ENCODE measurements at regions of chr7 and their contacts with region 1.

Region 1: GRCh38 chr7:26090927-26091519 is 61.0 kb upstream of the NFE2L3 start:
- DNase-seq: peak; percentile 20
- ATAC-seq: peak; percentile 59
- H3K4me3 Mint-ChIP-seq: peak overlapping the region; percentile 1
- H3K27ac Mint-ChIP-seq: peak overlapping the region; percentile 33
- H3K4me1 Mint-ChIP-seq: peaks cover 20% of the 10 kb centered on the region
- H3K27me3 Mint-ChIP-seq: no peaks in the 10 kb centered on the region
- CTCF ChIP-seq: peak; percentile 78

Region 2: DNA sequence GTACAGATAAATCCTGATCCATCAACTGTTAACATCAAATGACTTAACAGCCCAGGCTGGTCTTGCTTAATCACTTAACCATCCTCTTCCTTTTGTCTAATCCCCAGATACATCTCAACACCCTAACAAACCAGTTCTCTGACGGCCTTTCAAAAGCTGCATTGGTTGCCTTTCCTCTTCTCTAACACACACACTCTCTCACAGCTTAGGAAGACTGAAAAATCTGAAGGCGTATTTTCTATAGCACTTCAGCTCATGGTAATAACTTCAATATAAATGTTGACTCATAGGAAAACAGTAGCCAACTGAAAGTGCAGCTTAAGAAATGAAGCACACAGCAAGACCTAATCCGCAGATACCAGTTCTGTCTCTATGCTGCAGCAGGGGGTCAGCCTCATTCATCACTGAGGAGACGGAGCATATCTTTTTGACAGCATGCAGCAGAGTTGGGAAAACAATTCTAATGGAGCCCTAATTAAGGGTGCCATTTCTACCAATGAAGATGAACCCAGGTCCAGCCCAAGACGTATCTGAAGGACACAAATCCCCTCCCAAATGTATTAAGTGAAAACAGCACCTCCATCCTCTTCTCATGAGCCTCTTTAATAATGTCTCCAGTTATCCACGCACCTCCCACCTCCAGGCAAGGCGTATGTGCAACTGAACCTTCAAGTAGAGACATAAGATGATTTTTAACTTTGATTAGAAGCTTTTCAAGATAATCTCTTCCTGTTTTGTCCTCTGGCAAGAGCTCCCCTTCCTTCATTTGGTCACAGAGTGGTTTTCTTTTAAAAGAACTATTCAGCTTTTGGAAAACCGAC is 150.7 kb before region 1 on chr7:
- CTCF ChIA-PET with region 1: no interaction called
- POLR2A ChIA-PET with region 1: no interaction called
- intact Hi-C with region 1: no loop called
- DNase-seq: no peak
- ATAC-seq: peak; percentile 39
- H3K4me3 Mint-ChIP-seq: peak overlapping the region; percentile 41
- H3K27ac Mint-ChIP-seq: peak overlapping the region; percentile 70
- H3K4me1 Mint-ChIP-seq: peaks cover 12% of the 10 kb centered on the region
- H3K27me3 Mint-ChIP-seq: peaks cover 16% of the 10 kb centered on the region
- CTCF ChIP-seq: no peak

Region 3: GRCh38 chr7:26101361-26102151 is 10.5 kb after region 1 on chr7:
- CTCF ChIA-PET with region 1: interaction called, 19 read pairs
- POLR2A ChIA-PET with region 1: no interaction called
- intact Hi-C with region 1: no loop called
- DNase-seq: peak; percentile 30
- ATAC-seq: no peak
- H3K4me3 Mint-ChIP-seq: peak overlapping the region; percentile 60
- H3K27ac Mint-ChIP-seq: peak overlapping the region; percentile 83
- H3K4me1 Mint-ChIP-seq: peaks cover 47% of the 10 kb centered on the region
- H3K27me3 Mint-ChIP-seq: no peaks in the 10 kb centered on the region
- CTCF ChIP-seq: no peak

Region 4: DNA sequence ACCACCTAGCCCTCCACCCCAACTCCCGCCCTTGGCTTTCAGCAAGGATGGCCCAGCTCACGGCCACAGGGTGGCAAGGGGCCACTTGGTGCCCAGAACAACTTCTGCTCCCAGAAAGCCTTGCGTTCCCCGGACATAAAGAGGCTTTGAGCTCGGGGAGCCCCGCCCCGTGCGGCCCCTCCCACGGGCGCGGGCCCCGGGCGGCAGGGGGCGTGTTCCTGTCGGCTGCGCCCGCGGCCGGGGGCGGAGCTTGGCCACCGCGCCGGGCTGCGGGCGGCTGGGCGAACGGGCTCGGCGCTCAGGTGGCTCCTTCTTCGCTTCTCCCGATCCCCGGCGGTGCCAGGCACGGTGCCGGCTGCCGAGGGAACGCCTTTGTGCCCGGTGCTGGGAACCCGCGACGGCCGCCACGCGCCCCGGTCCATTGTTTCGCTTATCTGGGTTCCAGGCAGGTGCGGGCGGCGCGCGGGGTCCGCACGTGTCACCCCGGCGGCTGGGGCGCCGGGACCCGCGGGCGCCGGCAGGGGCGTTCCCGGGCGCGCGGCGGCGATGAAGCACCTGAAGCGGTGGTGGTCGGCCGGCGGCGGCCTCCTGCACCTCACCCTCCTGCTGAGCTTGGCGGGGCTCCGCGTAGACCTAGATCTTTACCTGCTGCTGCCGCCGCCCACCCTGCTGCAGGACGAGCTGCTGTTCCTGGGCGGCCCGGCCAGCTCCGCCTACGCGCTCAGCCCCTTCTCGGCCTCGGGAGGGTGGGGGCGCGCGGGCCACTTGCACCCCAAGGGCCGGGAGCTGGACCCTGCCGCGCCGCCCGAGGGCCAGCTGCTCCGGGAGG is 61.1 kb after region 1 on chr7 and contains the start of gene NFE2L3:
- CTCF ChIA-PET with region 1: interaction called, 21 read pairs
- POLR2A ChIA-PET with region 1: no interaction called
- intact Hi-C with region 1: loop called (anchors 5 kb)
- DNase-seq: peak; percentile 88
- ATAC-seq: peak; percentile 72
- H3K4me3 Mint-ChIP-seq: peak within 1 kb of the TSS; percentile 96
- H3K27ac Mint-ChIP-seq: peak within 1 kb of the TSS; percentile 99
- H3K4me1 Mint-ChIP-seq: peaks cover 51% of the 10 kb centered on the region
- H3K27me3 Mint-ChIP-seq: no peaks in the 10 kb centered on the region
- CTCF ChIP-seq: no peak
- total RNA-seq, gene NFE2L3: 21.5 to 22.6 TPM

Region 5: DNA sequence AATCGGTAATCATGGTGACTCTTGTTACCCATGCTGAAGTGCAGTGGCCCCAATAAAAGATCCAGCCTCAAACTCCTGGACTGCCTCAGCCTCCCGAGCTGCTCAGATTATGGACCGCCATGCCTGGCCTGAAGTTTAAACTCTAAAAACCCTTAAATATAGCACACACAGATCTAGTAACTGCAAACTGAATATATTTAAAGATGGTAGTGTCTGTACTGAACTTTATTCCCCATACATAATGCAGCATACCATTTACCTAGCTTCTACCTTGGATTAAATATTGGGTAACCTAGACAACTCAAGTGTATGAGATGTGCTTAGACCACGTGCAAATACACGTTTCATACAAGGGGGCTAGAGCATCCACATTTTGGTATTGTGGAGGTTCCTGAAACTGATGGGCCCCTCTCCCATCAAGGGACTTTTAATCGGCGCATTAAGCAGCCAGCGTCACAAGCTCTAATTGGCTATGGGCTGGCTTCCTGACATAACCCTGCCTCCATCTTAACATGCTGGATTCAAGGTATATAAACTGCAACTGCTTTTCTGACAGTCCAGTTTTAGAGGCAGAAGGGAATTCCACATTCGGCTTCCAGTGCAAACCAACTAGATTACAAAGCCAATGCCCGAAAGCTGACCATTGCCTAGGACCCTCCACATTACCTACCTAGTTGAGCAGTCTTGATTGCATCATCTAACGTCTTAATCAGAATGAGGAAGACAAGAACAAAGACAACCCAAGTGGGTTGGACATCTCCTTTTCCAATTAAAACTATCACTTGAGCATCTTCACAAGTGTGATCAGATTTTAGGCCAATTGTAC is 96.6 kb after region 1 on chr7:
- CTCF ChIA-PET with region 1: interaction called, 141 read pairs
- POLR2A ChIA-PET with region 1: interaction called, 85 read pairs
- intact Hi-C with region 1: loop called (anchors 5 kb)
- DNase-seq: peak; percentile 40
- ATAC-seq: peak; percentile 21
- H3K4me3 Mint-ChIP-seq: peak overlapping the region; percentile 11
- H3K27ac Mint-ChIP-seq: peak overlapping the region; percentile 85
- H3K4me1 Mint-ChIP-seq: peaks cover 87% of the 10 kb centered on the region
- H3K27me3 Mint-ChIP-seq: no peaks in the 10 kb centered on the region
- CTCF ChIP-seq: no peak

Region 6: DNA sequence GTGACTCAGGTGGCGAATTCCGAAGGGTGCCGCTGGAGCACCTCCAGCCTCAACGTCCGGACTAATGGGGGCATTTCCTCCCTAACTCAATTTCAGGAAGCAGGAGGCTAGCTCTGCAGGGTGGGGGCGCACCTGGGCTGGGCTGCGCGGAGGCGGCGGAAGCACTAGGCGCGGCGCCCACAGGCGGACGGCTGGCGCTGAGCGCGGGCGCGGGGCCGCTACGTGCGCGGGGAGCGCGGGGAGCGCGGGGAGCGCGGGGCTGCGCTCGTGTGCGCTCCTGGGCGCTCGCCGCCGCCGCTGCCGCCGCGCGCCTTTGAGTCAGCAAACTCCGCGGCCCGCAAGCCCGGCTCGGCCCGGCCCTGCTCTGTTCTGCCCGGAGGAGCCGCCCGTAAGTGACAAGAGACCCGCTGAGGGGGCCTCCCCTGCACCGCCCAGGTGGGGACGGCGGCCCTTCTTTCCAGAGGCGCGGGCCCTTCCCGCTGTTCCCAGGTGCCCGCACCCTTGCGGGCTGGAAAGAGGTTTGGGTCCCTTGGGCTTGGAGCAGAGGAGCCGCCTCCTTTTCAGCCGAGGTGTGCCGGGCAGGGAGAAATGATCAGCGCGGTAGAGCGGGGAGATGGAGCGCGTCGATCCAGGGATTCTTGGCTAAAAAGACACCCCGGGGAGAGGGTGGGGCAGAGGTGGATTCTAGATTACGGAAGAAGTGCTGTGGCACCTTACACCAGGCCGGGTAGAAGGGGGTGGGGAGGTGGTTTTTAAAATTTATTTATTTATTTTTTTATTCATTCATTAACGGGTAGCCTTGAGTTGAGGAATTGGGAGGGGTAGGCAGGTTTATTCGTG is 200.9 kb after region 1 on chr7 and contains the start of gene SNX10:
- CTCF ChIA-PET with region 1: interaction called, 11 read pairs
- POLR2A ChIA-PET with region 1: no interaction called
- intact Hi-C with region 1: no loop called
- DNase-seq: peak; percentile 77
- ATAC-seq: peak; percentile 69
- H3K4me3 Mint-ChIP-seq: peak within 1 kb of the TSS; percentile 96
- H3K27ac Mint-ChIP-seq: peak within 1 kb of the TSS; percentile 91
- H3K4me1 Mint-ChIP-seq: peaks cover 28% of the 10 kb centered on the region
- H3K27me3 Mint-ChIP-seq: no peaks in the 10 kb centered on the region
- CTCF ChIP-seq: no peak
- total RNA-seq, gene SNX10: 47.8 to 51.1 TPM

Region 7: GRCh38 chr7:26648554-26648953 is 557.5 kb after region 1 on chr7:
- CTCF ChIA-PET with region 1: no interaction called
- POLR2A ChIA-PET with region 1: no interaction called
- intact Hi-C with region 1: no loop called
- DNase-seq: no peak
- ATAC-seq: no peak
- H3K4me3 Mint-ChIP-seq: no peak overlapping the region
- H3K27ac Mint-ChIP-seq: no peak overlapping the region
- H3K4me1 Mint-ChIP-seq: no peaks in the 10 kb centered on the region
- H3K27me3 Mint-ChIP-seq: peaks cover 6% of the 10 kb centered on the region
- CTCF ChIP-seq: no peak

Measured in activated CD8-positive, alpha-beta T cell treated with anti-CD3 and anti-CD28 coated beads for 36 hours (primary cell).